Activated naive CD4-positive, alpha-beta T cell treated with anti-CD3 and anti-CD28 coated beads for 36 hours (primary cell): ENCODE measurements at regions of chr9 and their contacts with region 1.

Region 1: GRCh38 chr9:99130069-99130468 is 25.2 kb downstream of the TGFBR1 start:
- DNase-seq: peak; percentile 20
- H3K4me3 Mint-ChIP-seq: no peak overlapping the region
- H3K27ac Mint-ChIP-seq: peak overlapping the region; percentile 54
- H3K4me1 Mint-ChIP-seq: peaks cover 73% of the 10 kb centered on the region
- H3K27me3 Mint-ChIP-seq: no peaks in the 10 kb centered on the region

Region 2: GRCh38 chr9:99076483-99077171 is 53.4 kb before region 1 on chr9:
- CTCF ChIA-PET with region 1: no interaction called
- intact Hi-C with region 1: no loop called
- DNase-seq: peak; percentile 30
- H3K4me3 Mint-ChIP-seq: no peak overlapping the region
- H3K27ac Mint-ChIP-seq: no peak overlapping the region
- H3K4me1 Mint-ChIP-seq: peaks cover 23% of the 10 kb centered on the region
- H3K27me3 Mint-ChIP-seq: no peaks in the 10 kb centered on the region

Region 3: GRCh38 chr9:99112750-99113413 is 17.2 kb before region 1 on chr9:
- CTCF ChIA-PET with region 1: no interaction called
- intact Hi-C with region 1: loop called (anchors 2 kb)
- DNase-seq: peak; percentile 58
- H3K4me3 Mint-ChIP-seq: peak overlapping the region; percentile 57
- H3K27ac Mint-ChIP-seq: peak overlapping the region; percentile 73
- H3K4me1 Mint-ChIP-seq: peaks cover 83% of the 10 kb centered on the region
- H3K27me3 Mint-ChIP-seq: no peaks in the 10 kb centered on the region

Region 4: DNA sequence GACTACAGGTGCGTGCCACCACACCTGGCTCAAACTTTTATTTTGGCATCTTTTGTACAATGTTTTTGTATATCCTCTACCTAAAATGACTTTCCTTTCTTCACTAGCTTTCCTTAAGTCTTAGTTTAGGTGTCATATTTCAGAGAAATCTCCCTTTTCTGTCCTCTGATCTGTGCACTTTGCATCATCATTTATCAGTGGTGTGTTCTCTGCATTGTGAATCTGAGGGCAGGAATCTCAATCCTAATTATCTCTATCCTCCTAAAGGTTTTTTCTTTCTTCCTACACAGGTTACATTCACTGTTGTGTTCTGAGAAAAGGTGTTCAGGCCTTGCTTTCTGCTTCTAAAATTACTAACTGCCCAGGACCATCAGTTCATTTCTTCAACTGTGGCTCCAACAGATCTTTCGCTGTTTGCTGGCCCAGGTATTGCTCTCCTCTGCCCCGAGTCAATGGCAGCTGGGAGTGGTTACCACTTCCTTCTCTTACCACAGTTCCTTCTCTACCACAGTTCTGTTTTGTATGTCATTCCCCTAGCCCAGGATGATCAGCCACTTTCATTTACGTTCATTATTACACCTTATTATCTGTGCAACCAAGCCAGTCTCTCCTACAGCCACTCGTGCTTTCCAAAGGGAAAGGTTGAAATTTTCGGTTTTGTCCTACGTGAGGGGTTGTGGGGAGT is 11.1 kb before region 1 on chr9:
- CTCF ChIA-PET with region 1: interaction called, 3 read pairs
- intact Hi-C with region 1: loop called (anchors 1 kb)
- DNase-seq: peak; percentile 80
- H3K4me3 Mint-ChIP-seq: peak overlapping the region; percentile 70
- H3K27ac Mint-ChIP-seq: peak overlapping the region; percentile 90
- H3K4me1 Mint-ChIP-seq: peaks cover 85% of the 10 kb centered on the region
- H3K27me3 Mint-ChIP-seq: no peaks in the 10 kb centered on the region